Activated CD4-positive, alpha-beta memory T cell treated with anti-CD3 and anti-CD28 coated beads, Interleukin-2, amount 10 ng/mL, durations not matched to agents 7 days and 5 days (primary cell): ENCODE measurements at regions of chr11 and their contacts with region 1.

Region 1: DNA sequence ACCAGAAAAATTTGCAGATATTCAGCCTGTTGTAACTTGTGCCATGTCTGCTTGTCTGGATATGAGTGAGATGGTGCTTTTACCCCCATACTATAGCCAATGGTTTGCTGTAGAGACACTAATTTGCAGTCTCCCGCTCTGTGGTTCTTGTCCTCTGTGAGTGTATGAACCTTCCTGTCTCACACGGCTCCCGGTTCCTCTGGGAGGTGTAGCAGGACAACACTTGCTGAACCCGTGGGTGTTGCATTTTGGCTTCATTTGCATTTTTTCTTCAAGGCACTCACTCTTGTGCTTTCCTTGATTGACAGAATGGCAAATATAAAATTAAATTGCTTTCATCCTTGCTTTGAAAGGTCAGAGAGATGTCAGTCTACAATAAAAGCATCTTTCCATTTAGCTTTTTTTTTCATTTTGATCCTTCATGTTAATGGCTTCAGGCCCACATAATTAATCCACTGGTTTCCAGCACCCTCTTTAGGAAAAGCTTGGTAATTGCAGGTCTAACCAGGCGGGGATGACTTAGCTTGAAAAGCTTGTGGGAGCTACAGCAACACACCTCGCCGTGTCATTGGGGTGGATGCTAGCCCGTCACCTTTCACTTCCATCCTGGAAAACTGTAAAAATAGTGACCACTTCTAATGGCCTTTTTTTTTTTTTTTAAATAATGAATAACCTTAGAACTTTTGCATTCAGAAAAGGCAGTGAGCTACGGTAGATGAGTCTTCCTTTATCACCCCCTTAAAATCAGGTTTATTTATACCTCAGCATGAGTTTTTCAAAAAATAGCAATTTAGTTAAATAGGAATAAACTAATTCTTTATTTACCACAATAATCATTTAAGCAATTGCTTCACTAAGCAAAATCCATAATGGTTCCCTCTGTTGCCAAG is 27.4 kb upstream of the ST14 start:
- DNase-seq: peak; percentile 49
- H3K4me3 Mint-ChIP-seq: no peak overlapping the region
- H3K27ac Mint-ChIP-seq: no peak overlapping the region
- H3K4me1 Mint-ChIP-seq: no peaks in the 10 kb centered on the region
- H3K27me3 Mint-ChIP-seq: no peaks in the 10 kb centered on the region

Region 2: DNA sequence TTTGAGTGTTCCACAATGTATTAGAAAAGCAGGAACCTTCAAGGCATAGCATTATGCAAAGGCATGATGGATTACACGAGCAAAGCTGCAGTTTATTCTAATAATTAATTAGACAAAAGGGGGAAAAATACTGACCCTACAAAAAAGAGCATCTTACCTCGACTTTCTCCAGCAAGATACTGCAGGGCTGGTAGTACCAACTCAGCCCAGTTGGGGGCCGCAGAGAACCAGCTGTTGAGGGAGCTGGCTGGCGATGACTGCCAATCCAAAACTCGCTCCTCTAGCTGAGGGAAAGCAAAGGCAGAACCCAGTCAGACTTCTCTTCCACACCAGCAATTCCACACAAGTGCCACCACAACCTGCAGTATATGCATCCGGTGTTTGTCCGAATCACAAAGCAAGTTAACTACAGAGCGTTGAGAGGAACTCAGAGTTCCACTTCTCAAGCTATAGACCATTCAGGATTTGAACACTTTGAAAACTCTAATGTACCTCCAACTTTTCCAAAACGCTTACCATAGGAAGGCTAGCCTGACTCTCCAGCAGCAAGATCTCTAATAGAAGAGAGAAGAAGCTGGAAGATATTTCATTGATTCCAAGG is 250.5 kb before region 1 on chr11:
- CTCF ChIA-PET with region 1: interaction called, 35 read pairs
- POLR2A ChIA-PET with region 1: no interaction called
- DNase-seq: peak; percentile 47
- H3K4me3 Mint-ChIP-seq: no peak overlapping the region
- H3K27ac Mint-ChIP-seq: no peak overlapping the region
- H3K4me1 Mint-ChIP-seq: no peaks in the 10 kb centered on the region
- H3K27me3 Mint-ChIP-seq: no peaks in the 10 kb centered on the region

Region 3: GRCh38 chr11:129930296-129930695 is 201.9 kb before region 1 on chr11:
- CTCF ChIA-PET with region 1: interaction called, 162 read pairs
- POLR2A ChIA-PET with region 1: interaction called, 3 read pairs
- DNase-seq: no peak
- H3K4me3 Mint-ChIP-seq: no peak overlapping the region
- H3K27ac Mint-ChIP-seq: no peak overlapping the region
- H3K4me1 Mint-ChIP-seq: no peaks in the 10 kb centered on the region
- H3K27me3 Mint-ChIP-seq: no peaks in the 10 kb centered on the region

Region 4: DNA sequence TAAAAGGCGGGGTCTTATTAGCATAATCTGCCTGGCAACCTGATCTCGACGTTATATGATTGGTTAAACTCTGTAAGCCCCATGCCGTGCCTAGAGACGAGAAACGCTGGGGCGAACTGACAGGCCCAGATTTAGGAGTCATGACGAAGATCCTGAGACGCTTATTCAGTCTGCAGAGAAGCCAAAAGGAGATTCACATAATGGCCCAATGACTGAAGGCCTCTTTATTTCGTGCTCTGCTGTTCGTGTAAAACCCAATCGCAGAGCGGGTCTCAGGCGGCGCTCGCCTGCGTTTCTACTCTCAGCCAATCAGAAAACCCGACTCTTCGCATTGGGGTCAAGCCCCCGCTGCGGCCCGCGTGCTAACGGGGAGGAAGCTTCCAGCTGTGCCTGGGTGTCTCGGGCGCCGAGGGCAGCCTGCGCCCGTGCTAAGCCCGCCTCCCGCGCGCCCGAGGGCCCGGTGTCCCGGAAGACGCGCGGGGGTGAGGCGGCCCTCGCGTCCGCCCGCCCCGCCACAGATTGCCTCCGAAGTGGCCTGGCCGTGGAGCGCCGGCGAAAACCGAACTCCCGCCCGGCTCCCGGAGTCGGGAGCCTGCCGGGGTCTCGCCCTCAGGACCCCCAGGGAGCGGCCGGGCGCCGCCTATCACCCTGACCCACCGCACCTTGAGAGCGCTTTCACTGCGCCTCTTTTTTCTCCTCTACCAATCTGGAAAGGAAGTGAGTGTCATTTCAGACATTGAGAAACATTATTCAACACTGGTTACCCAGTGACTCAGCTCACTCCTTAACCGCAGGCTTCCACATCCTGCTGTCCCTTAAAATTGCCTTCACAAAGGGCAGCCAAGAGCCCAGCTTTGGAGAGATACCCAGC is 129.1 kb before region 1 on chr11:
- CTCF ChIA-PET with region 1: interaction called, 40 read pairs
- POLR2A ChIA-PET with region 1: interaction called, 8 read pairs
- DNase-seq: peak; percentile 91
- H3K4me3 Mint-ChIP-seq: peak overlapping the region; percentile 97
- H3K27ac Mint-ChIP-seq: peak overlapping the region; percentile 98
- H3K4me1 Mint-ChIP-seq: peaks cover 33% of the 10 kb centered on the region
- H3K27me3 Mint-ChIP-seq: peaks cover 2% of the 10 kb centered on the region

Region 5: GRCh38 chr11:130037058-130037457 is 95.1 kb before region 1 on chr11:
- CTCF ChIA-PET with region 1: no interaction called
- POLR2A ChIA-PET with region 1: no interaction called
- DNase-seq: no peak
- H3K4me3 Mint-ChIP-seq: no peak overlapping the region
- H3K27ac Mint-ChIP-seq: no peak overlapping the region
- H3K4me1 Mint-ChIP-seq: no peaks in the 10 kb centered on the region
- H3K27me3 Mint-ChIP-seq: peaks cover 4% of the 10 kb centered on the region

Region 6: DNA sequence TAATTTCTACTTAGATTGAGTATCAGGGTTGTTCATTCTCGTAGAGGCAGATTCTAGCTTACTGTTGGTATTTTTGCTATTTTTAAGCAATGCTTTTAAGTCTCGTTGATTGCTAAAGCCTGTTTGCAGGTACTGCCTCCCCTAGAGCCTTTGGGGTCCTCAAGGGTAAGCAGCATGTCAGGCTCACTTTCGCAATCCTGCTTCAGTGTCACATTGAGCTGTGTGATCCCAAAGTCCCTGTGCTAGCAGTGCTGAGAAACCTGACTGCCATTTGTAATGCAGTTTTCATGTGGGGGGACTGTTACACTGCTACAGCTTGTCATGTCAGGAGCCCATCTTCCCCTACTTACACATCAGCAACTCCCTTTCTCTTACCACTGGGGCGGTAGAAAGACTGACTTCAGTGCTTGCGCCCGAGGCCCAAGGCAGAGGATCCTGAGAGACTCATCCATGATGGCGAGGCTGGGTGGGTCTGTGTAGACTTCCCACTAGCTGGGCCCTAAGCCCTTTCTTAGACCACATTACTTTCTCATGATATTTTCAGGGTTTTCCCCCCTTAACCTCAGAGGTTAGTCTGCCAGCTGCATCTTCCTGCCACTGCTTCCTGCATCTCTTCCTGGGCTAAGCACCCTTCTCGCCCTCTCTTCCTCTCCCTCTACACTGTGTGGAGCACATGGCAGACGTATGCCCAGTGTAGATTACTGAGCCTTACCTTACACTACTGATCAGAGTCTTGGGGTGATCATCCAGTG is 13.4 kb before region 1 on chr11:
- CTCF ChIA-PET with region 1: interaction called, 31 read pairs
- POLR2A ChIA-PET with region 1: no interaction called
- DNase-seq: no peak
- H3K4me3 Mint-ChIP-seq: no peak overlapping the region
- H3K27ac Mint-ChIP-seq: no peak overlapping the region
- H3K4me1 Mint-ChIP-seq: peaks cover 35% of the 10 kb centered on the region
- H3K27me3 Mint-ChIP-seq: peaks cover 23% of the 10 kb centered on the region